ENCODE measurements at regions of chr1 and their contacts with region 1.

Region 1: DNA sequence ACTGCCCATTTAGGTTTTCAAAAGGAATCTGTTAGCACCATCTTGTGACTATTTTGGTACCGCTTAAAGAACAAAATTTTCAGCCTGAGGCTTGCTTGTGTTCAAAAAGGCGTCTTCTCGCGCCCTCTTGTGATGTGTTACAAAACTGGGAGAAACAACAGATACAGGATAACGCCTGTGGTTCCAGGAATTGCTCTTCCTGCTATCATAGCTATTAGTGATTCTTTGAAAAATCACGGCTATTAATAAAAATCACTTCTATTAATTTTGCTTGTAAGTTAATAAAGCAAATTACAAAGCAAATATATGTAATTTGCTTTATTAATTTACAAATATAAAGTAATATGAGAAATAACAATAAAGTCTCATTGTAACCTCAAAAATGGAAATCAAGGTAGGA is 82.2 kb upstream of the ABCD3 start:
- DNase-seq: peak; percentile 70
- H3K4me3 Mint-ChIP-seq: no peak overlapping the region
- H3K27ac Mint-ChIP-seq: no peak overlapping the region
- H3K4me1 Mint-ChIP-seq: peaks cover 25% of the 10 kb centered on the region
- H3K27me3 Mint-ChIP-seq: no peaks in the 10 kb centered on the region
- CTCF ChIP-seq: peak; percentile 68

Region 2: GRCh38 chr1:94025383-94026340 is 310.3 kb before region 1 on chr1:
- CTCF ChIA-PET with region 1: interaction called, 30 read pairs
- intact Hi-C with region 1: loop called (anchors 1 kb)
- DNase-seq: peak; percentile 54
- H3K4me3 Mint-ChIP-seq: peak overlapping the region; percentile 32
- H3K27ac Mint-ChIP-seq: no peak overlapping the region
- H3K4me1 Mint-ChIP-seq: peaks cover 33% of the 10 kb centered on the region
- H3K27me3 Mint-ChIP-seq: peaks cover 10% of the 10 kb centered on the region
- CTCF ChIP-seq: no peak

Region 3: GRCh38 chr1:94039514-94039870 is 296.5 kb before region 1 on chr1:
- CTCF ChIA-PET with region 1: interaction called, 36 read pairs
- intact Hi-C with region 1: no loop called
- DNase-seq: peak; percentile 75
- H3K4me3 Mint-ChIP-seq: no peak overlapping the region
- H3K27ac Mint-ChIP-seq: no peak overlapping the region
- H3K4me1 Mint-ChIP-seq: peaks cover 16% of the 10 kb centered on the region
- H3K27me3 Mint-ChIP-seq: no peaks in the 10 kb centered on the region
- CTCF ChIP-seq: peak; percentile 84

Region 4: DNA sequence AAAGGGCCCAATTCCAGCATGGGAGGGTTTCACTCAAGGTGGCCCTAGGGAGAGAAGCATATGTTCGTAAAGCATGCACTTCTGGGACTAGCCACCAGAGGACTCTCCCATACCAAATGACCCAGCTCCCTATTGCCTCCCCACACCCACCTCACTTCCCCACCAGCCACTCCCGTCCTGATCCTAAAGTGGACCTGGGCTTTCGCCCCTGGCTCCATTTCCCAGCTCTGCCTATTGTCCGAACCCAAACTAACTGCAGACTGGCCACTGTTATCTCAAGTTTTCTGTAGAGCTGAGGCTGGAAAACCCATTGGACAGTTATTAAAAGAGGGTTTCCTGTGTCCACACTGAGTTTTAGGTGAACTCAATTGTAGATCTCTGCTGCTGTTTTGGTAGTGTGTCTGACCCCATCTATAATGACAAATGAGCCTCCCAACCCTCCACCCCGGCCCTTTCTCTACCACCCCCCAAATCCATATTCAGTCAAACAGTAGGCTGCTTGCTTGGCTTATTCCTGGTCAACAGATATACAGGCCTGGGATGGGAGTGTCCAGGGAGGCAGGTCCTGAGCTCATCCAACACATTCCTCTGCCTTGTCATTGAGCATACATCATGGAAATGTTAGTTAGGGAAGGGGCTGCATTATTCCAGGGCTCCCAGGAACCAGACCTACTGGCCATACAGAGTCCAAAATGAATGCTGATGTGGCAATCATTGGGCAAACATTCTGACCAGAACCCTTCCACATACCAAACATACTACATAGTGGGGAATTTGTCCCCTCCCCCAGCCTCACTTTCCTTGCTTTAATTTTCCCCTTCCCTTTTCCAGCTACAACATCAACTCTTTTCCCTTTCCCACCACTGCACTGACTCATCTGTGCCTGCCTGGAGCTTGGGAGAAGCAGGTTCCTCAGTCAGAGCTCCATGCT is 274.2 kb before region 1 on chr1:
- CTCF ChIA-PET with region 1: interaction called, 107 read pairs
- intact Hi-C with region 1: loop called (anchors 1 kb)
- DNase-seq: peak; percentile 73
- H3K4me3 Mint-ChIP-seq: no peak overlapping the region
- H3K27ac Mint-ChIP-seq: no peak overlapping the region
- H3K4me1 Mint-ChIP-seq: peaks cover 29% of the 10 kb centered on the region
- H3K27me3 Mint-ChIP-seq: no peaks in the 10 kb centered on the region
- CTCF ChIP-seq: peak; percentile 82

Region 5: GRCh38 chr1:94237291-94238226 is 98.4 kb before region 1 on chr1 and contains the start of gene ARHGAP29:
- CTCF ChIA-PET with region 1: interaction called, 11 read pairs
- intact Hi-C with region 1: no loop called
- DNase-seq: peak; percentile 95
- H3K4me3 Mint-ChIP-seq: peak within 1 kb of the TSS; percentile 83
- H3K27ac Mint-ChIP-seq: peak within 1 kb of the TSS; percentile 77
- H3K4me1 Mint-ChIP-seq: peaks cover 41% of the 10 kb centered on the region
- H3K27me3 Mint-ChIP-seq: no peaks in the 10 kb centered on the region
- CTCF ChIP-seq: no peak
- total RNA-seq, gene ARHGAP29: 57.9 and 62.6 TPM in 2 replicates

Region 6: DNA sequence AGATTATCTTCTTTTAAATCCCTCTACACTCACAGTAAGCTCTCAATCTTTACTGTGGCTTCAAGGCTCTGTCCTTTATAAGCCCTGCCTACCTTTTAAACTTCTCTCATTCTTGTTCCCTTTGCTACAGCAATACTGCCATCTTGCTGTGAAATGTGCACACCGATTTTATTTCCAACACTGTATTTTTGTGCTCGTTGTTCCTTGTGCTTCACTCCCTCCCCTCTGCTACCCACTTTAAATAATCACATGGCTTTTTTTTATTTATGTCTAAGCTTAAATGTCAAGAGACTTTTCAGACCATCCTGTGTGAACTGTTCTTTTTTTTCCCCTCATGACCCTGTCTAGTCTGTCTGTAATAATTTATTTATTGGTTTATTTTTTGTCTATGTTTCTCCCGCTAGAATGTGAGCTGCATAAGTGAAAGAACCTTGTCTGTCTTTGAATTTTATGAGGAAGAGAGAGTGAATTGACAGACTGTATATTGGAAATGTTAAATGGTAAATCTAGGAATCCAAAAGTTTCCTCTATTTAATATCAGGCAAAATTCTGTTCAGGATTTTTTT is 127.9 kb after region 1 on chr1:
- CTCF ChIA-PET with region 1: interaction called, 18 read pairs
- intact Hi-C with region 1: loop called (anchors 1 kb)
- DNase-seq: peak; percentile 34
- H3K4me3 Mint-ChIP-seq: no peak overlapping the region
- H3K27ac Mint-ChIP-seq: peak overlapping the region; percentile 13
- H3K4me1 Mint-ChIP-seq: peaks cover 25% of the 10 kb centered on the region
- H3K27me3 Mint-ChIP-seq: no peaks in the 10 kb centered on the region
- CTCF ChIP-seq: peak; percentile 63